ENCODE measurements at regions of chr10 and their contacts with region 1.

Region 1: DNA sequence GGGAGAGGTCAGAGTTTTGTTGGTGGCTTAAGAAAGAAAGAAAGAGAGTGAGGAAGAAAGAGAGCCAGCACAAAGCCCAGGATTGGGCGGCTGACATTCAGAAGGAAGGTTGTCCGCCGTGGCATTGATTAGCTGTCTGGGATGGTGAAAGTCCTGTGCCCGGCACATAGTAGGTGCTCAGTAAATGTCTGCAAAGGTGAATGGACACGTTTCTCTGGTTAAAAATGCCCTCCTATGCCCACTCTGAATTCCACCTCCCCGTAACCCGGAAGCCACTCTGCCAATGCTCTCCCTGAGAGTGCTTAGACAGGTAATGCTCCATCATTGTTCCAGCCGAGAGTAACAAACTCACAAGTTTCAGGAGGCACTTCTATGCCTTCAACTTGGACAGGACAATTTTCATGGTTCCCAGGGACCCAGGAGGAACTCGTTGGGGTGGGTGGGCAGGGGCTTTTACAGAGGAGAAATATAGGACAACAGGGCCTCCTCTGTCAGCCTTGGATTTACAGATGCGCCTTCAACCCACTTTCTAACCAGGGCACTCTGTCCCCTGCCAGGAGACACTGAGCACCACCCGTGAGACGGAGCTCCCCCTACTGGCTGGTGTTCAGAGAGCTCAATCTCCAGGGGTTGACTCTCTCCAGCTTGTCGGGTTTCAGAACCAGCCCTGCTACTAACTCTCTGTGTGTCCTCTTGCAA is 411.5 kb upstream of the ZMIZ1 start:
- DNase-seq: peak; percentile 34 to 48 (median 41)
- H3K4me3 ChIP-seq: no peak overlapping the region
- H3K4me3 Mint-ChIP-seq: no peak overlapping the region
- H3K27ac ChIP-seq: no peak overlapping the region
- H3K27ac Mint-ChIP-seq: no peak overlapping the region
- H3K4me1 ChIP-seq: no peaks in the 10 kb centered on the region
- H3K4me1 Mint-ChIP-seq: no peaks in the 10 kb centered on the region
- H3K27me3 ChIP-seq: no peaks in the 10 kb centered on the region
- H3K27me3 Mint-ChIP-seq: peaks cover 2 to 24% of the 10 kb centered on the region in 2 donors

Region 2: GRCh38 chr10:78211561-78212051 is 445.7 kb before region 1 on chr10:
- CTCF ChIA-PET with region 1: no interaction called
- POLR2A ChIA-PET with region 1: no interaction called
- intact Hi-C with region 1: loop called (anchors 10 kb)
- DNase-seq: no peak
- H3K4me3 ChIP-seq: no peak overlapping the region
- H3K4me3 Mint-ChIP-seq: no peak overlapping the region
- H3K27ac ChIP-seq: no peak overlapping the region
- H3K27ac Mint-ChIP-seq: peak overlapping the region in 2 of 7 donors; percentile 14 to 44
- H3K4me1 ChIP-seq: no peaks in the 10 kb centered on the region
- H3K4me1 Mint-ChIP-seq: no peaks in the 10 kb centered on the region
- H3K27me3 ChIP-seq: no peaks in the 10 kb centered on the region
- H3K27me3 Mint-ChIP-seq: peaks cover 1 to 12% of the 10 kb centered on the region in 2 donors

Region 3: GRCh38 chr10:78570633-78571235 is 86.6 kb before region 1 on chr10:
- CTCF ChIA-PET with region 1: no interaction called
- POLR2A ChIA-PET with region 1: no interaction called
- intact Hi-C with region 1: no loop called
- DNase-seq: no peak
- H3K4me3 ChIP-seq: no peak overlapping the region
- H3K4me3 Mint-ChIP-seq: no peak overlapping the region
- H3K27ac ChIP-seq: no peak overlapping the region
- H3K27ac Mint-ChIP-seq: no peak overlapping the region
- H3K4me1 ChIP-seq: no peaks in the 10 kb centered on the region
- H3K4me1 Mint-ChIP-seq: no peaks in the 10 kb centered on the region
- H3K27me3 ChIP-seq: no peaks in the 10 kb centered on the region
- H3K27me3 Mint-ChIP-seq: peaks cover 7 to 8% of the 10 kb centered on the region in 2 donors

Region 4: GRCh38 chr10:78623578-78624215 is 33.6 kb before region 1 on chr10:
- CTCF ChIA-PET with region 1: no interaction called
- POLR2A ChIA-PET with region 1: no interaction called
- intact Hi-C with region 1: no loop called
- DNase-seq: no peak
- H3K4me3 ChIP-seq: no peak overlapping the region
- H3K4me3 Mint-ChIP-seq: no peak overlapping the region
- H3K27ac ChIP-seq: no peak overlapping the region
- H3K27ac Mint-ChIP-seq: peak overlapping the region in 1 of 7 donors; percentile 38
- H3K4me1 ChIP-seq: no peaks in the 10 kb centered on the region
- H3K4me1 Mint-ChIP-seq: no peaks in the 10 kb centered on the region
- H3K27me3 ChIP-seq: no peaks in the 10 kb centered on the region
- H3K27me3 Mint-ChIP-seq: peaks cover 10 to 13% of the 10 kb centered on the region in 2 donors